Psoas muscle (tissue), 8 donors: ENCODE measurements at regions of chr4 and their contacts with region 1.

Region 1: GRCh38 chr4:142474335-142475087 is 371.6 kb downstream of the INPP4B start:
- DNase-seq: no peak
- ATAC-seq: no peak
- H3K4me3 ChIP-seq: no peak overlapping the region
- H3K27ac ChIP-seq: no peak overlapping the region
- H3K4me1 ChIP-seq: no peaks in the 10 kb centered on the region
- H3K27me3 ChIP-seq: no peaks in the 10 kb centered on the region
- CTCF ChIP-seq: no peak

Region 2: DNA sequence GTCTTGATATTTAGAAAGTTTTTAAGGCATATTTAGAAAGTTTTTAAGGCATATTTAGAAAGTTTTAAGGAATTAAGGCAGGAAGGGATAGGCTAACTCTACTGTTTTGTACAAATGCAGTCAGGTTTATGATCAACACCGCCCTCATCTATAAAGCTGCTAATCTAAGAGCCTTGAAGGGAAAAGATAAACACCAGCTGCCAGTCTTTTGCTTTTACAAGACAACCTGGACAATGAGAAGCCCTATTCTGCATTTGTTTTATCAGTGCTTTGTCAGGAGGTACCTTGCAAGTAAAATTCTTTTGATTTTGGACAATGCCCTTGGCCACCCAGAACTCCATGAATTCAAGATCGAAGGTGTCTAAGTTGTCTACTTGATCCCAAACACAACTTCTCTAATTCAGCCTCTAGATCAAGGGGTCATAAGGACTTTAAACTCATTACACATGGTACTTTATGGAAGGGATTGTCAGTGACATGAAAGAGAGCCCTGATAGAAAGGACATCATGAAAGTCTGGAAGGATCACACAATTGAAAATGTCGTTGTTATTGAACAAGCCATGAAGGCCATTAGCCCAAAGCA is 798.3 kb before region 1 on chr4:
- intact Hi-C with region 1: no loop called
- DNase-seq: no peak
- ATAC-seq: no peak
- H3K4me3 ChIP-seq: no peak overlapping the region
- H3K27ac ChIP-seq: no peak overlapping the region
- H3K4me1 ChIP-seq: peaks cover 6% of the 10 kb centered on the region
- H3K27me3 ChIP-seq: no peaks in the 10 kb centered on the region
- CTCF ChIP-seq: no peak

Region 3: GRCh38 chr4:142347241-142347640 is 127.3 kb before region 1 on chr4:
- intact Hi-C with region 1: no loop called
- DNase-seq: no peak
- ATAC-seq: no peak
- H3K4me3 ChIP-seq: no peak overlapping the region
- H3K27ac ChIP-seq: no peak overlapping the region
- H3K4me1 ChIP-seq: peaks cover 17% of the 10 kb centered on the region
- H3K27me3 ChIP-seq: no peaks in the 10 kb centered on the region
- CTCF ChIP-seq: no peak

Region 4: DNA sequence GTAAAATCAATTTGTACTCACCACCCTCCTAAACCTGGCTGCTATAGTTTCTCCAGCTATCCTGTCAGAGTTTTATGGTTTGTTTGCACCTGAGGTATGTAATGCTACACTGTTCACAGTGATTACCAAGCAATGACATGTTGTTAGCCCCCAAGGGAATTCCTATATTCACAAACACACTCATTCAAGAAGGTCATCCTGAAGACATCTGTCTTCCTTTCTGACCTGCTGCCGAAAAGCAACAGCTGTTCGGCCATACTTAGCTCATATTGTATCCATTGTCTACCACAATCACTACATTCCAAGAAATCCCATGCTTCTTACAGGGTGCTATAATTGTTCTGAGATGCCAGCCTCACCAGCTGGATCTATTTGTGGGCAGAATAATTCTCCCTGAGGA is 1826.1 kb after region 1 on chr4:
- intact Hi-C with region 1: loop called in 1 of 2 experiments (anchors 10 kb)
- DNase-seq: no peak
- ATAC-seq: no peak
- H3K4me3 ChIP-seq: no peak overlapping the region
- H3K27ac ChIP-seq: no peak overlapping the region
- H3K4me1 ChIP-seq: no peaks in the 10 kb centered on the region
- H3K27me3 ChIP-seq: no peaks in the 10 kb centered on the region
- CTCF ChIP-seq: no peak